CD4-positive, alpha-beta T cell (primary cell): ENCODE measurements at regions of chr21 and their contacts with region 1.

Region 1: DNA sequence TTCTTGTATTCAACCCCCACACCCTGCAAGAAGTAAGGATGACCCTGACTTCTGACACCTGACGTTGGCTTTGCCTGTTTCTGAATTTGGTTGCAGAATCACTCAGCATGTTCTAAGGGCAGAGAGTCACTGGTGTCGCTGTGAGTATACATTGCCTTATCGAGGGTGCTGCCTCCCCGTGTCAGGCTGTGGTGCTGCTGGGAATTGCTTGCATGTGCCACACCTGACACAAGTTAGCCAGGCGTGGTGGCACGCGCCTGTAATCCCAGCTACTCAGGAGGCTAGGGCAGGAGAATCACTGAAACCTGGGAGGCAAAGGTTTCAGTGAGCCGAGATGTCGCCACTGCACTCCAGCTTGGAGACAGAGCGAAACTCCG is 45.9 kb downstream of the WDR4 start:
- DNase-seq: peak; percentile 38 to 75 (median 57)
- ATAC-seq: peak; percentile 85
- H3K4me3 ChIP-seq: peak overlapping the region; percentile 24
- H3K4me3 Mint-ChIP-seq: peak overlapping the region; percentile 81
- H3K27ac ChIP-seq: no peak overlapping the region
- H3K27ac Mint-ChIP-seq: peak overlapping the region; percentile 40
- H3K4me1 ChIP-seq: peaks cover 35% of the 10 kb centered on the region
- H3K4me1 Mint-ChIP-seq: peaks cover 44% of the 10 kb centered on the region
- H3K27me3 ChIP-seq: no peaks in the 10 kb centered on the region
- H3K27me3 Mint-ChIP-seq: no peaks in the 10 kb centered on the region
- CTCF ChIP-seq: peak; percentile 46

Region 2: GRCh38 chr21:42309753-42310221 is 523.6 kb before region 1 on chr21:
- CTCF ChIA-PET with region 1: no interaction called
- POLR2A ChIA-PET with region 1: no interaction called
- intact Hi-C with region 1: loop called in 1 of 2 experiments (anchors 5 kb)
- DNase-seq: peak; percentile 61 to 85 (median 67)
- ATAC-seq: peak; percentile 86
- H3K4me3 ChIP-seq: no peak overlapping the region
- H3K4me3 Mint-ChIP-seq: no peak overlapping the region
- H3K27ac ChIP-seq: no peak overlapping the region
- H3K27ac Mint-ChIP-seq: no peak overlapping the region
- H3K4me1 ChIP-seq: peaks cover 18% of the 10 kb centered on the region
- H3K4me1 Mint-ChIP-seq: peaks cover 15% of the 10 kb centered on the region
- H3K27me3 ChIP-seq: peaks cover 9 to 11% of the 10 kb centered on the region in 2 experiments
- H3K27me3 Mint-ChIP-seq: peaks cover 12% of the 10 kb centered on the region
- CTCF ChIP-seq: peak; percentile 80

Region 3: GRCh38 chr21:42593007-42593806 is 240.2 kb before region 1 on chr21:
- CTCF ChIA-PET with region 1: no interaction called
- POLR2A ChIA-PET with region 1: interaction called, 4 read pairs
- intact Hi-C with region 1: loop called (anchors 1 to 5 kb)
- DNase-seq: peak; percentile 45 to 80 (median 68)
- ATAC-seq: peak; percentile 89
- H3K4me3 ChIP-seq: no peak overlapping the region
- H3K4me3 Mint-ChIP-seq: no peak overlapping the region
- H3K27ac ChIP-seq: no peak overlapping the region
- H3K27ac Mint-ChIP-seq: no peak overlapping the region
- H3K4me1 ChIP-seq: peaks cover 17% of the 10 kb centered on the region
- H3K4me1 Mint-ChIP-seq: peaks cover 24% of the 10 kb centered on the region
- H3K27me3 ChIP-seq: no peaks in the 10 kb centered on the region
- H3K27me3 Mint-ChIP-seq: no peaks in the 10 kb centered on the region
- CTCF ChIP-seq: peak; percentile 86

Region 4: GRCh38 chr21:42684109-42684916 is 149.1 kb before region 1 on chr21:
- CTCF ChIA-PET with region 1: no interaction called
- POLR2A ChIA-PET with region 1: no interaction called
- intact Hi-C with region 1: loop called in 1 of 2 experiments (anchors 5 kb)
- DNase-seq: peak; percentile 23 to 73 (median 42)
- ATAC-seq: peak; percentile 68
- H3K4me3 ChIP-seq: peak overlapping the region; percentile 41
- H3K4me3 Mint-ChIP-seq: peak overlapping the region; percentile 91
- H3K27ac ChIP-seq: peak overlapping the region; percentile 29 to 34
- H3K27ac Mint-ChIP-seq: peak overlapping the region; percentile 93
- H3K4me1 ChIP-seq: peaks cover 50% of the 10 kb centered on the region
- H3K4me1 Mint-ChIP-seq: peaks cover 49% of the 10 kb centered on the region
- H3K27me3 ChIP-seq: no peaks in the 10 kb centered on the region
- H3K27me3 Mint-ChIP-seq: no peaks in the 10 kb centered on the region
- CTCF ChIP-seq: no peak

Region 5: DNA sequence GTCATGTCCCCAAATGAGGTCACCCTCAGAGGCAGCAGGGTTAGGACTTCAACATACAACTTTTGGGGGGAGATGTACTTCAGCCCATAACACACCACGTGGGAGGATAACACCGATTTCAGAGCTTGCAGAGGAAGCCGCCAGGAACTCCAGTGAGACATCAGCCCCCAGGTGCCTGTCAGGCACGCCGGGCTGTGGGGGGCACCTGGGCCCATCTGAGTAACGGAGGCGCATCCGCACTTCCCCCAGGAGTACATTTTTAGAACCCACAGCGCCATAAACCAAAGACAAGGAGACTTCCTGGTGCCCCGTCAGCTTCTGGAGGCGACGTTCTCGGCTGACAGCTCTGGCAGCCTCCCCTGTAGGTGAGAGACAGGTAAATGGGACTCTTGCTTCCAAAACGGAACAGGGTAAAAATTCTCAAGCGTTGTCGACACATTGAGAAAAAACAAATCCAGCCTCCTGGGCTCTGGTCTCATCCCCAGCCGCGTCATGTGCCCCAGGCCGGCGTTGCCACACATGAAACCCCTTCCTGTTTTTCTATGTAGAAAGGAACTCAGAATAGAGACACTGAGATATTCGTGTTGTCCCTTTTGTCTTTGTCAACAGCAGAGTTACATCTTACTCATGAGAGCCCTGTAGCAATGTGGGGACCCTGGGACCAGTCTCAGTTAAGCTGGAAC is 86.7 kb before region 1 on chr21:
- CTCF ChIA-PET with region 1: no interaction called
- POLR2A ChIA-PET with region 1: interaction called, 4 read pairs
- intact Hi-C with region 1: loop called in 1 of 2 experiments (anchors 5 kb)
- DNase-seq: peak; percentile 32 to 81 (median 64)
- ATAC-seq: peak; percentile 83
- H3K4me3 ChIP-seq: peak overlapping the region; percentile 29
- H3K4me3 Mint-ChIP-seq: peak overlapping the region; percentile 57
- H3K27ac ChIP-seq: peak overlapping the region; percentile 67 to 76
- H3K27ac Mint-ChIP-seq: peak overlapping the region; percentile 99
- H3K4me1 ChIP-seq: peaks cover 32% of the 10 kb centered on the region
- H3K4me1 Mint-ChIP-seq: peaks cover 29% of the 10 kb centered on the region
- H3K27me3 ChIP-seq: no peaks in the 10 kb centered on the region
- H3K27me3 Mint-ChIP-seq: no peaks in the 10 kb centered on the region
- CTCF ChIP-seq: no peak

Region 6: GRCh38 chr21:42862774-42863503 is 29.5 kb after region 1 on chr21:
- CTCF ChIA-PET with region 1: no interaction called
- POLR2A ChIA-PET with region 1: no interaction called
- intact Hi-C with region 1: no loop called
- DNase-seq: no peak
- ATAC-seq: no peak
- H3K4me3 ChIP-seq: no peak overlapping the region
- H3K4me3 Mint-ChIP-seq: no peak overlapping the region
- H3K27ac ChIP-seq: no peak overlapping the region
- H3K27ac Mint-ChIP-seq: no peak overlapping the region
- H3K4me1 ChIP-seq: no peaks in the 10 kb centered on the region
- H3K4me1 Mint-ChIP-seq: peaks cover 5% of the 10 kb centered on the region
- H3K27me3 ChIP-seq: no peaks in the 10 kb centered on the region
- H3K27me3 Mint-ChIP-seq: no peaks in the 10 kb centered on the region
- CTCF ChIP-seq: no peak